Activated CD4-positive, alpha-beta T cell treated with anti-CD3 and anti-CD28 coated beads for 36 hours (primary cell): ENCODE measurements at regions of chr2 and their contacts with region 1.

Region 1: GRCh38 chr2:25878361-25879132 is at the start of gene ASXL2:
- DNase-seq: peak; percentile 99
- ATAC-seq: peak; percentile 87
- H3K4me3 Mint-ChIP-seq: peak within 1 kb of the TSS; percentile 91
- H3K27ac Mint-ChIP-seq: peak within 1 kb of the TSS; percentile 95
- H3K4me1 Mint-ChIP-seq: peaks cover 45% of the 10 kb centered on the region
- H3K27me3 Mint-ChIP-seq: no peaks in the 10 kb centered on the region
- total RNA-seq, gene ASXL2: 36.8 to 46.4 TPM

Region 2: GRCh38 chr2:24075915-24076848 is 1802.4 kb before region 1 on chr2 and contains the start of gene SF3B6:
- CTCF ChIA-PET with region 1: no interaction called
- POLR2A ChIA-PET with region 1: no interaction called
- intact Hi-C with region 1: loop called in 1 of 2 experiments (anchors 5 kb)
- DNase-seq: peak; percentile 100
- ATAC-seq: peak; percentile 91
- H3K4me3 Mint-ChIP-seq: peak within 1 kb of the TSS; percentile 99
- H3K27ac Mint-ChIP-seq: peak within 1 kb of the TSS; percentile 99
- H3K4me1 Mint-ChIP-seq: peaks cover 43% of the 10 kb centered on the region
- H3K27me3 Mint-ChIP-seq: no peaks in the 10 kb centered on the region
- total RNA-seq, gene SF3B6: 128 to 143 TPM

Region 3: GRCh38 chr2:25376750-25377621 is 501.6 kb before region 1 on chr2:
- CTCF ChIA-PET with region 1: no interaction called
- POLR2A ChIA-PET with region 1: no interaction called
- intact Hi-C with region 1: loop called in 1 of 2 experiments (anchors 2 kb)
- DNase-seq: peak; percentile 96
- ATAC-seq: peak; percentile 98
- H3K4me3 Mint-ChIP-seq: peak overlapping the region; percentile 69
- H3K27ac Mint-ChIP-seq: peak overlapping the region; percentile 92
- H3K4me1 Mint-ChIP-seq: peaks cover 42% of the 10 kb centered on the region
- H3K27me3 Mint-ChIP-seq: no peaks in the 10 kb centered on the region

Region 4: DNA sequence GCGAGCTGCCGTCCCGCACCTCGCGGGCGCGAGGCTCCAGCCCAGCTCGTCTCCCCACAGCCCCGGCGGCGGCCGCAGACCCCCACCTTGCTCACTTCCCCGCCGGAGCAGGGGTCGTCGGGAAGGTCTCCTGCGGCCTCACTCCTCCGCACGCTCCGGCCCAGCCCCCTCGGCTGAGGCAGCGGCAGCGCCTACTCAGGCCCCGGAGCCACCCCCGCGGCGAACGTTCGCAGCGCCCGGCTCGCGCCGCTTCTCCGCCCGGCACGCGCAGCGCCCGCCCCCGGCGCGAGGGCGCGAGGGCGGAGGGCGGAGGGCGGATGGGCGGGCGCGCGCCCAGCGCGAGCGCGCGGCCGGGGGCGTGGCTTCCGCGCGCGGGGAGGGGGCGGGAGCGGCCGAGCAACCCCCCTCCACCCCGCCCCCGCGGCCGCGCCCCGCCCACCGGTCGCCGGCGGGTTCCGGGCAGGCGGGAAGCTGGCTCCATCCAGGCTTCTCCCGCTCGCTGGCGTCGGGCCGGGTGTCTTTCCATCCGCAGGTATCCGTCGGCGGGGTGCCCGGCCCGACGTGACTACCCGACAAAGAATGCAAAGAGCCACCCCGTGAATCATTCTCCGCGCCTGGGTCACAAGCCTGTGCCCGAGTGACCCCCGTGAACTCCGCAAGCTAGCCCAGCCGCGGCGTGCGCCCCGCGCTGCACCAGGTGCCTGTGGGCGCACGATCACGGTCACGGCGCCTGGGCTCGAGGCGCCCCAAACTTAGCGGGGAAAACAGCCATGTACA is 205.1 kb before region 1 on chr2 and contains the start of gene DTNB:
- CTCF ChIA-PET with region 1: no interaction called
- POLR2A ChIA-PET with region 1: interaction called, 5 read pairs
- intact Hi-C with region 1: loop called (anchors 1 kb)
- DNase-seq: peak; percentile 86
- ATAC-seq: peak; percentile 74
- H3K4me3 Mint-ChIP-seq: peak within 1 kb of the TSS; percentile 79
- H3K27ac Mint-ChIP-seq: peak within 1 kb of the TSS; percentile 76
- H3K4me1 Mint-ChIP-seq: peaks cover 31% of the 10 kb centered on the region
- H3K27me3 Mint-ChIP-seq: peaks cover 11% of the 10 kb centered on the region
- total RNA-seq, gene DTNB: 17.1 to 33.5 TPM

Region 5: DNA sequence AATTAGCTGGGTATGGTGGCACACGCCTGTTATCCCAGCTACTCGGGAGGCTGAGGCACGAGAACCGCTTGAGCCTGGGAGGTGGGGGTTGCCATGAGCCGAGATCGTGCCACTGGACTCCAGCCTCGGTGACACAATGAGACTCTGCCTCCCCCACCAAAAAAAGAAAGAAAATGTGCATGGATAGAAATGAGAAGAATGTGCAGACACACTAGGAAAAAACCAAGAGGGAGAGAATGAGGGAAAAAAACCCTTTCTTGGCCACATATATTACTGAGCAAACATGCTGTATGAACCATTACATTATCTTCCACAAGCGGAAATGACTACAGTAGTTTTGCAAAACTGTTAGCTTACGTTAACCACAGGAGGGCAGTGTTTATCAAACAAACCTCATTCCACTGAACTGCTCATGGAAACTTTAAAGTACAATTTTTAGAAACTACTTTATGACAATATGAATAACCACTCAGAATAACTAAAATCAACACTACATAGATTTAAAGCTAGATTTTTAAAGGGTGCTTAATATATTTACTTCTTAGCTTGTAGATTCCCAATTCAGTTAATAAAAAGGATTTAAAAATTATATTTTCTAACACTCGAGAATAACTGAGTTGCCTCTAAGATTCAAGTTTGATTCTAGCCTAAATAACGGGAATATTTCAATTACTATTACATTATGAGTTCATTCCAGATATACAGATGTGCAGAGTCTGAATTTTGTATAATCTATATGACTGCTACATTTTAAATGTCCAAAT is 26.6 kb before region 1 on chr2:
- CTCF ChIA-PET with region 1: interaction called, 11 read pairs
- POLR2A ChIA-PET with region 1: interaction called, 3 read pairs
- intact Hi-C with region 1: loop called (anchors 1 kb)
- DNase-seq: peak; percentile 38
- ATAC-seq: peak; percentile 90
- H3K4me3 Mint-ChIP-seq: peak overlapping the region; percentile 64
- H3K27ac Mint-ChIP-seq: peak overlapping the region; percentile 86
- H3K4me1 Mint-ChIP-seq: peaks cover 44% of the 10 kb centered on the region
- H3K27me3 Mint-ChIP-seq: no peaks in the 10 kb centered on the region

Region 6: GRCh38 chr2:26033818-26034636 is 155.5 kb after region 1 on chr2 and contains the start of gene RAB10:
- CTCF ChIA-PET with region 1: no interaction called
- POLR2A ChIA-PET with region 1: interaction called, 7 read pairs
- intact Hi-C with region 1: loop called (anchors 1 kb)
- DNase-seq: peak; percentile 99
- ATAC-seq: peak; percentile 95
- H3K4me3 Mint-ChIP-seq: peak within 1 kb of the TSS; percentile 98
- H3K27ac Mint-ChIP-seq: peak within 1 kb of the TSS; percentile 90
- H3K4me1 Mint-ChIP-seq: peaks cover 28% of the 10 kb centered on the region
- H3K27me3 Mint-ChIP-seq: no peaks in the 10 kb centered on the region
- total RNA-seq, gene RAB10: 103 to 160 TPM

Region 7: GRCh38 chr2:26244309-26245121 is 366.0 kb after region 1 on chr2 and contains the starts of genes HADHA and HADHB:
- CTCF ChIA-PET with region 1: no interaction called
- POLR2A ChIA-PET with region 1: interaction called, 3 read pairs
- intact Hi-C with region 1: loop called (anchors 1 to 10 kb)
- DNase-seq: peak; percentile 90
- ATAC-seq: peak; percentile 80
- H3K4me3 Mint-ChIP-seq: peak within 1 kb of the TSS; percentile 99
- H3K27ac Mint-ChIP-seq: peak within 1 kb of the TSS; percentile 98
- H3K4me1 Mint-ChIP-seq: peaks cover 47% of the 10 kb centered on the region
- H3K27me3 Mint-ChIP-seq: no peaks in the 10 kb centered on the region
- total RNA-seq, gene HADHA: 149 to 154 TPM
- total RNA-seq, gene HADHB: 71.4 to 73.4 TPM